Colonic mucosa (tissue), 4 donors: ENCODE measurements at regions of chr1 and their contacts with region 1.

Region 1: GRCh38 chr1:116472431-116472961 is 98.3 kb downstream of the CD58 start:
- DNase-seq: peak; percentile 63
- H3K4me3 ChIP-seq: no peak overlapping the region
- H3K27ac ChIP-seq: peak overlapping the region; percentile 28
- H3K4me1 ChIP-seq: peaks cover 17% of the 10 kb centered on the region
- H3K27me3 ChIP-seq: no peaks in the 10 kb centered on the region
- CTCF ChIP-seq: no peak

Region 2: DNA sequence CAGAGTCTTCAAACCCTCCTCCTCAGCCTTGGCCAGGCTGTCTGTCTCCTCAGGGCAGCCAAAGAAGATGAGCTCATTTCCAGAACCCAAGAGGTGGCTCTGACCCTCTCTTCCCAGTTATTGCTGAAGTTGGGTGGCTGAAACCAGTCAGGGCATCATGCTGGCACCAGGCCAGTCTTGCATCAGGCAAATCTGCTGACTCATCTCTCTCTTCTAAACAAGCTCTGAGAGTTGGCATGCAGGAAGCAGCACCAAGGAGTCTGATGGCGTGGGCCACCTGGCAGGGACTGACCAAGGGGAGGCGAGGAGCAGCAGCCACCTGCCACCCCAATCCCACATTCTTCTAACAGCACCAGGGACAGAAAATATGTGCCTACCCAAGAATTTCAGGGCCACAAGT is 204.3 kb before region 1 on chr1:
- intact Hi-C with region 1: loop called (anchors 10 kb)
- DNase-seq: peak; percentile 52
- H3K4me3 ChIP-seq: no peak overlapping the region
- H3K27ac ChIP-seq: no peak overlapping the region
- H3K4me1 ChIP-seq: no peaks in the 10 kb centered on the region
- H3K27me3 ChIP-seq: no peaks in the 10 kb centered on the region
- CTCF ChIP-seq: no peak

Region 3: DNA sequence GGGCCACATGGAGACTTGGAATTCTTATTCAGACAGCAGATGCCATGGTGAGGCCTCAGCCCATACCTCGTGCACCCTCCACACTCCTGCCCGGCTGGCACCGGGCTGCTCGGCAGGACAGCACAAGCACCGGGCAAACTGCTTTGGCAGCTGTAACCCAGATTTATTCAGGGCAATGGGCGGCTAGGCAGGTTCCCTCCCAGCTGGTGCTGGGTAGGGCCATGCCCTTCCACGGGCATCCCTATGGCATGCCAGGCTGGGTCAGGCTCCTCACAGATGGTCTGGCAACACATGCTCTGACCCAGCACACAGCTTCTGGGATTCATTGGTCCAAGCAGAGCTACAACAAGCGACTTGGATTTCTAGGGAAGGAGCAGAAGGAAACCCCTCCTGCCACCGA is 46.1 kb before region 1 on chr1:
- intact Hi-C with region 1: loop called (anchors 10 kb)
- DNase-seq: no peak
- H3K4me3 ChIP-seq: no peak overlapping the region
- H3K27ac ChIP-seq: no peak overlapping the region
- H3K4me1 ChIP-seq: no peaks in the 10 kb centered on the region
- H3K27me3 ChIP-seq: no peaks in the 10 kb centered on the region
- CTCF ChIP-seq: no peak

Region 4: DNA sequence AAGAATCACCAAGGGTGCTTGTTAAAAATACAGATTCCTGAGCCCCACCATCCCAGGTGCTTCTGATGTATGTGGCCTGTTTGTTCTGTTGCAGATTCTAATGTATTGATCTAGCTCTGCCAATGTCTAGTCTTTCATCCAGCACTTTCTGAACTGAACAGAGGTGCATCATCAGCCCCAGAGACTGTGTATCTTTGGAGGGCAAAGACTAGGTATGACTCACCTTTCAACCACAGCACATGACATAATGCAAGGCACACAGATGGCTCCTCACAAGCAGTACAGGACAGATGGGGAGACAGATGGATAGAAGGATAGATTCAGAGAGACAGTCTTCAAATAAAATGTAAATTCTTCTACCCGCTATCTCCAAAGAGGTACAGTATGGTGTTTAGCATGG is 66.0 kb after region 1 on chr1:
- intact Hi-C with region 1: no loop called
- DNase-seq: no peak
- H3K4me3 ChIP-seq: no peak overlapping the region
- H3K27ac ChIP-seq: no peak overlapping the region
- H3K4me1 ChIP-seq: no peaks in the 10 kb centered on the region
- H3K27me3 ChIP-seq: no peaks in the 10 kb centered on the region
- CTCF ChIP-seq: no peak